Dendritic cell treated with granulocyte-macrophage colony-stimulating factor and Interleukin-4, amounts not matched to agents 40 ng/mL and 50 ng/mL, for 4 days (primary cell): ENCODE measurements at regions of chr11 and their contacts with region 1.

Region 1: DNA sequence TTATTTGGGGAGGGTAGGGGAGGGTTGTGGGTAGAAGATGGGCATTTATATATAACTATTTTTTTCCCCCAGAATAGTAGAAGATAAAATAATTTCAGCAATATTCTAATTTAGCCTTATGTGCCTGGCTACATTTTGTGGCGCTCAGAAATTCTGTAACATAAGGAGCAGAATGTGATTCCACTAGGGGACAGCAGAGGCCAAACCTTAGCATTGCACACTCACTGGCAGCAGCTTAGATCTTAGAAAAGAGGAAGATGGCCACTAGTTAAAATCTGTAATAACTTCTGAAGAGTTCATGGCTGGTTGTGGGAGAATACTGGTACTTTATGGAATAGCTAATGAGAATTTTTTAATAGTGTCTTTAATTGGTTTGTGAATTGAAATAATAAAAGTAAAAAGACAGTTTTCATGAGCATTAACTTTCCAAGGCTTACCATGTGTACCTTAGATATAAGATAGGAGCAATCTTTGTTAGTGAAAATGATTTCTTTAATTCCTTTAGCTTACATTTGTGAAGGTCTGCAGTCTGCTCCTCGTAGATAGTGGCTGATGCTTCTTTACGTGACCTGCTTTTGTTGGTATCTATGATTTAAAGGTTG is 33.1 kb downstream of the DDX10 start:
- H3K4me3 Mint-ChIP-seq: no peak overlapping the region
- H3K27ac Mint-ChIP-seq: no peak overlapping the region
- H3K4me1 Mint-ChIP-seq: peaks cover 26% of the 10 kb centered on the region
- H3K27me3 Mint-ChIP-seq: no peaks in the 10 kb centered on the region

Region 2: GRCh38 chr11:108685419-108686130 is 12.4 kb before region 1 on chr11:
- intact Hi-C with region 1: no loop called
- H3K4me3 Mint-ChIP-seq: no peak overlapping the region
- H3K27ac Mint-ChIP-seq: no peak overlapping the region
- H3K4me1 Mint-ChIP-seq: no peaks in the 10 kb centered on the region
- H3K27me3 Mint-ChIP-seq: no peaks in the 10 kb centered on the region

Region 3: GRCh38 chr11:108733479-108734116 is 35.6 kb after region 1 on chr11:
- intact Hi-C with region 1: loop called (anchors 2 kb)
- H3K4me3 Mint-ChIP-seq: no peak overlapping the region
- H3K27ac Mint-ChIP-seq: peak overlapping the region; percentile 73
- H3K4me1 Mint-ChIP-seq: peaks cover 28% of the 10 kb centered on the region
- H3K27me3 Mint-ChIP-seq: no peaks in the 10 kb centered on the region

Region 4: GRCh38 chr11:108871152-108871551 is 173.2 kb after region 1 on chr11:
- intact Hi-C with region 1: loop called (anchors 10 kb)
- H3K4me3 Mint-ChIP-seq: no peak overlapping the region
- H3K27ac Mint-ChIP-seq: no peak overlapping the region
- H3K4me1 Mint-ChIP-seq: no peaks in the 10 kb centered on the region
- H3K27me3 Mint-ChIP-seq: no peaks in the 10 kb centered on the region

Region 5: GRCh38 chr11:109697140-109697843 is 999.3 kb after region 1 on chr11:
- intact Hi-C with region 1: loop called (anchors 1 kb)
- H3K4me3 Mint-ChIP-seq: no peak overlapping the region
- H3K27ac Mint-ChIP-seq: no peak overlapping the region
- H3K4me1 Mint-ChIP-seq: no peaks in the 10 kb centered on the region
- H3K27me3 Mint-ChIP-seq: peaks cover 2% of the 10 kb centered on the region

Region 6: GRCh38 chr11:109939166-109939810 is 1241.3 kb after region 1 on chr11:
- intact Hi-C with region 1: loop called (anchors 1 kb)
- H3K4me3 Mint-ChIP-seq: no peak overlapping the region
- H3K27ac Mint-ChIP-seq: no peak overlapping the region
- H3K4me1 Mint-ChIP-seq: peaks cover 35% of the 10 kb centered on the region
- H3K27me3 Mint-ChIP-seq: no peaks in the 10 kb centered on the region